A549 (cell line): ENCODE measurements at regions of chr17 and their contacts with region 1.

Region 1: GRCh38 chr17:42997984-42998938 is at the start of gene RPL27:
- DNase-seq: peak; percentile 96 to 100
- ATAC-seq: peak; percentile 92 to 95
- H3K4me3 ChIP-seq: peak within 1 kb of the TSS; percentile 66
- H3K27ac ChIP-seq: peak within 1 kb of the TSS; percentile 87 to 91
- H3K4me1 ChIP-seq: peaks cover 45% of the 10 kb centered on the region
- CTCF ChIP-seq: peak; percentile 88
- EP300 ChIP-seq: no peak; a peak in 1 of 5 replicates
- POLR2A ChIP-seq: peak; percentile 88
- RAD21 ChIP-seq: peak; percentile 79 to 84
- polyA plus RNA-seq, gene RPL27: 5,588 and 5,746 TPM in 2 replicates

Region 2: GRCh38 chr17:42832974-42833766 is 165.1 kb before region 1 on chr17 and contains the start of gene PSME3:
- CTCF ChIA-PET with region 1: interaction called, 17 read pairs
- POLR2A ChIA-PET with region 1: interaction called, 8 read pairs
- DNase-seq: peak; percentile 92 to 96
- ATAC-seq: peak; percentile 96 to 97
- H3K4me3 ChIP-seq: peak within 1 kb of the TSS; percentile 94
- H3K27ac ChIP-seq: peak within 1 kb of the TSS; percentile 95 to 96
- H3K4me1 ChIP-seq: peaks cover 22% of the 10 kb centered on the region
- CTCF ChIP-seq: no peak
- EP300 ChIP-seq: no peak
- POLR2A ChIP-seq: peak; percentile 98
- RAD21 ChIP-seq: no peak; a peak in 1 of 5 replicates
- polyA plus RNA-seq, gene PSME3: 220 and 257 TPM in 2 replicates

Region 3: DNA sequence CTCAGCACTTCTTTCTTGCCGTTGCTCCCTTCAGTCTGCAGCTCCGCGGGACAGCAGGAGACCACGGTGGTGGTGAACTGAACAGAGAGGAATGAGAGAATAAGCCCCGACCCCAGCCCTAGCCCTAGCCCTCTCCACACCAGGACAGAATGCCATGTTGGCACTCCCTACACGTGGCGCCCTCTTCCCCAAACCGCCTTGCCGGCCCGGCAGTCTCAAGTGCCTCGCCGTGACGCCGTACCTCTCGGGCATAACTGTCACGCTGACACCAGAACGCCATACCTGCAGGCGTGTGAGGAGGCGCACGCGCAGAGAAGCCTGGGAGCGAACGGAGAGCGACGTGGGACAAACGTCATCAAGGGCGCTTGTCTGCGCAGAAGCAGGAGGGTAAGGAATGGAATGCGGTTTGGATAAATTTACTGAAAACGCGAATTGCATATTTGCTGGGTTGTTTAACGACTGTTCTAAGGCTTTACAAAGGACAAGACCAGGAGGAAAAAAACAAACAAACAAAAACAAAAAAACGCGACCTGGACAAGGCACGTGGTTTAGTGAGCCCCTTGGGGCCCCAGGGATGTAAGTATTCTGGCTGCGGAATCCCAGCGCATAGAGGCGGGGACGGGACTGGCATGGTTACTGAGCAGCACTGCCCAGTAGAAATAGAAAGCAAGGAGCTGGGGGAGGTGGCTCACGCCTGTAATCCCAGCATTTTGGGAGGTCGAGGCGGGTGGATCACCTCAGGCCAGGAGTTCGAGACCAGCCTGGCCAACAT is 33.9 kb before region 1 on chr17 and contains the start of gene AARSD1:
- CTCF ChIA-PET with region 1: interaction called, 29 read pairs
- POLR2A ChIA-PET with region 1: interaction called, 48 read pairs
- DNase-seq: peak; percentile 93 to 98
- ATAC-seq: peak; percentile 94 to 98
- H3K4me3 ChIP-seq: peak within 1 kb of the TSS; percentile 79
- H3K27ac ChIP-seq: peak within 1 kb of the TSS; percentile 74 to 89
- H3K4me1 ChIP-seq: peaks cover 8% of the 10 kb centered on the region; the same call in 2 of the 3 replicates
- CTCF ChIP-seq: no peak
- EP300 ChIP-seq: no peak
- POLR2A ChIP-seq: peak; percentile 97
- RAD21 ChIP-seq: 0 out of 5 replicates have a peak, but pooled peaks of 1 of the 2 experiments have one; percentile 5
- polyA plus RNA-seq, gene AARSD1: 56.9 and 66.6 TPM in 2 replicates

Region 4: DNA sequence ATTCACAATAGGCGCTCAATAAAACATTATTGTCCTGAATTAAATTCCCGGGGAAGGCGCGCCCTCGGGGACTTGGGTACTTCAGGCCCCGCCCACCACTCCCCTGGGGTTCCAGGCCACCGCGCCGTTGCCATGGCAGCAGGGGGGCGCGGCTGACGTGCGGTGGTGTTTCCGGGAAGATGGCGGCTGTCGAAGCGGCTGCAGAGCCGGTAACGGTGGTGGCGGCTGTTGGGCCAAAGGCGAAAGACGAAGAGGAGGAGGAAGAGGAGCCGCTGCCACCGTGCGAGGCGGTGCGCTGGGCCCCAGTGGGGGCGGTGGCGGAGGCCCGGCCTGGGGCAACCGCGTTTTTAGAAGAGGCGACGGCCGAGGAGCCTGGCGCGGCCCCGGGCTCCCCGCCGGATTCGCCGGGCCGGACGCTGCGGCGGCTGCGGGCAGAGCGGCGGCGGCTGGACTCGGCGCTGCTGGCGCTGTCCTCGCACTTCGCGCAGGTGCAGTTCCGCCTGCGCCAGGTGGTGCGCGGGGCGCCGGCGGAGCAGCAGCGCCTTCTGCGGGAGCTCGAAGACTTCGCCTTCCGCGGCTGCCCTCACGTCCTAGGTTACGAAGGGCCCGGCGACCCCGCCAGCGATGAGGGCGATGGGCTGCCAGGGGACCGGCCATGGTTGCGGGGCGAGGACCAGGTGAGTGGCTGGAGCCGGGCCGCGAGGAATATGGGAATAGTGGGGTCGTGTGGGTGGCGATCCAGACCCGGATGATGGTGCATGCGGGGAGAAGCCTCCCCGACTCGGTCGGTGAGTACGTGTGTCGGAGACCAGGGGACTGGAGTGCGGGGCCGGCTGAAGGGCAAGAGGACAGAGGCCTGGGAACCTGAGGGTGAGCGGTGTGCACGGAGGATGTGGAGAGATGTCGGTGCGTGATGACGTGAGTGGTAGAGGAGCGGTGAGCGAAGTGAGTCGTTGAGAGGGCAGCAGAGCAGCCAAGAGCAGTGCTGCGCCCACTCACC is 17.6 kb before region 1 on chr17 and contains the start of gene RUNDC1:
- CTCF ChIA-PET with region 1: interaction called, 86 read pairs
- POLR2A ChIA-PET with region 1: interaction called, 36 read pairs
- DNase-seq: peak; percentile 92 to 98
- ATAC-seq: peak; percentile 88 to 94
- H3K4me3 ChIP-seq: peak within 1 kb of the TSS; percentile 86
- H3K27ac ChIP-seq: peak within 1 kb of the TSS; percentile 89 to 96
- H3K4me1 ChIP-seq: peaks cover 33% of the 10 kb centered on the region
- CTCF ChIP-seq: 0 out of 3 replicates have a peak, but pooled peaks have one; percentile 27
- EP300 ChIP-seq: peak in 1 of 2 experiments; percentile 12; a peak in 1 of 5 replicates
- POLR2A ChIP-seq: peak; percentile 94
- RAD21 ChIP-seq: peak in 1 of 2 experiments; percentile 40; a peak in 2 of 5 replicates
- polyA plus RNA-seq, gene RUNDC1: 19.1 and 21.4 TPM in 2 replicates